B cell (primary cell): ENCODE measurements at regions of chr2 and their contacts with region 1.

Region 1: DNA sequence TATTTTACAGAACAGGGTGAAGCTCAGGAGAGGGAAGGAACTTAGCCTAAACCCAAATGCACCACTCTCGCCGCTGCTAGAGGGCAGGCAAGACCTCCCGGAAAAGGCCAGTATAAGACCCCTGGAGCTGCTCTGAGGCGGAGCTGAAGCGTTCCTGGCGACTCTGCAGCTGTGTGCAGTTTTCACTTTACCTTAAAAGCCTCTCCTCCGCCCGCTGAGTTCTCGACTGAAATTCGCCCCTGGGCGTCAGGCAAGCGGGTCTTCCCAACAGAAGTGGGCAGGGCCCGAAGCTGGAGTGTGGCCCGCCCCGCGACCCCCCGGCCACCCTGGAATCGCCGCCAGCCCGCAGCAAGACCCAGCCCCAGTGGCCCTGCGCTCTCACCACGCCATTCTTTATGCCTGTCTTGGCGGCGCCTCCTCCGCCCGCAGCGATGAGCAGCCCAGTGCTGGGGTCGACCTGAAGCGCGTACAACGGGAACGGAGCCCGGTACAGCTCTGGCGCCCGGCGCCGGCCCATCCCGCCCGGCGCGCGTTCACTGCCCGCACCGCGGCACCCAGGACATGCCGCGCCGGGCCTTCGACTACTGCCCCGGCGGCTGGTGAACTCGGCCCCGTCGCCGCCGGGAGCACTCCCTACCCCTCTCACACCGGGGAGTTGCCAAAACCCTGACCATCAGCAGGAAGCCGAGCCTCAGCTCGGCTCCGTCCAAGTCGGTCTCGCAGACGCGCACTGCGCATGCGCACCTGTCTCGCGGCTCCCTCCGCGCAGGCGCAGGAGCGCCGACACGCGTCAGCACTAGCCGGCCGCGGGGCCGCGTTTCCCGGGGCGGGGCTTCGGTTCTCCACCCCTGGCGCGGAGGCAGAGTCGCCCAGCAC is at the start of gene PREB:
- DNase-seq: peak; percentile 97
- ATAC-seq: peak; percentile 99
- H3K4me3 ChIP-seq: peak within 1 kb of the TSS; percentile 62 to 89 (median 78)
- H3K4me3 Mint-ChIP-seq: peak within 1 kb of the TSS; percentile 96
- H3K27ac ChIP-seq: peak within 1 kb of the TSS in 1 of 2 donors; percentile 86
- H3K27ac Mint-ChIP-seq: peak within 1 kb of the TSS; percentile 97
- H3K4me1 ChIP-seq: peaks cover 17 to 25% of the 10 kb centered on the region in 2 donors
- H3K4me1 Mint-ChIP-seq: peaks cover 24% of the 10 kb centered on the region
- H3K27me3 ChIP-seq: no peaks in the 10 kb centered on the region
- H3K27me3 Mint-ChIP-seq: no peaks in the 10 kb centered on the region
- CTCF ChIP-seq: no peak
- total RNA-seq, gene PREB: 44.6 and 46.0 TPM in 2 replicates

Region 2: DNA sequence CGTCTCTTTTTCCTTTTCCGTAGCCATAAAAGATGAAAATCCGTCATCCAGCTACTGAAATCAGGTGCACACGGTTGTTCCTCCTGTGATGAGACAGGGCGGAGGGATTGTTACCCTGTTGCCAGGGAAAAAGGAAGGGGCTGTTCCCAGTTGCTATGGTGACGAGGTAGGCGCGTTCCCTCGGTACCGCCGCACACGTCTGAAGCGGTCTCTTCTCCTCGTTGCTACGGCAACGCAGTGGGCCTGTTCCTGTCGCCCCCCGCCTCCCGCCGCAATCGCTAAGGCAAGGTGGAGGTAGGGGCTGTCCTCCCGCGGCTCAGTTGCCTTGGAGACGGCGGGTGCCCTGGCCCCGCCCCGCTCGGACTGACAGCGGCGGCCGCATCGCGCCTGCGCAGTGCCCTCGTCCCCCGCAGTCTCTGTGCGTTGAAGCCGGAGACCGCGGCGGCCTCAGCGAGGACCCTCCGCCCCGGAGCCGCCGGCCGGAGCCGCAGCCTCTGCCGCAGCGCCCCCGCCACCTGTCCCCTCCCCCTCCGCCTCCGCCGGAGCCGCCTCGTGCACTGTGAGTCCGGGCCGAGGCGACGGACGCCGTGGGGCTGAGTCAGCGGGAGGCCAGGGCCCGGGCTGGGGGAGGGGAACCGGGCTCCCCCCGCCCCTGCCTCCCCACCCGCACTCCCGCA is 163.8 kb before region 1 on chr2 and contains the start of gene MAPRE3:
- CTCF ChIA-PET with region 1: no interaction called
- POLR2A ChIA-PET with region 1: no interaction called
- intact Hi-C with region 1: loop called (anchors 1 kb)
- DNase-seq: peak; percentile 92
- ATAC-seq: peak; percentile 94
- H3K4me3 ChIP-seq: peak within 1 kb of the TSS; percentile 59 to 70 (median 62)
- H3K4me3 Mint-ChIP-seq: peak within 1 kb of the TSS; percentile 91
- H3K27ac ChIP-seq: peak within 1 kb of the TSS in 1 of 2 donors; percentile 47
- H3K27ac Mint-ChIP-seq: peak within 1 kb of the TSS; percentile 59
- H3K4me1 ChIP-seq: peaks cover 11 to 12% of the 10 kb centered on the region in 2 donors
- H3K4me1 Mint-ChIP-seq: peaks cover 19% of the 10 kb centered on the region
- H3K27me3 ChIP-seq: peaks cover 2 to 11% (median 5%) of the 10 kb centered on the region in 4 experiments
- H3K27me3 Mint-ChIP-seq: peaks cover 26% of the 10 kb centered on the region
- CTCF ChIP-seq: no peak
- total RNA-seq, gene MAPRE3: 5.4 and 7.1 TPM in 2 replicates

Region 3: DNA sequence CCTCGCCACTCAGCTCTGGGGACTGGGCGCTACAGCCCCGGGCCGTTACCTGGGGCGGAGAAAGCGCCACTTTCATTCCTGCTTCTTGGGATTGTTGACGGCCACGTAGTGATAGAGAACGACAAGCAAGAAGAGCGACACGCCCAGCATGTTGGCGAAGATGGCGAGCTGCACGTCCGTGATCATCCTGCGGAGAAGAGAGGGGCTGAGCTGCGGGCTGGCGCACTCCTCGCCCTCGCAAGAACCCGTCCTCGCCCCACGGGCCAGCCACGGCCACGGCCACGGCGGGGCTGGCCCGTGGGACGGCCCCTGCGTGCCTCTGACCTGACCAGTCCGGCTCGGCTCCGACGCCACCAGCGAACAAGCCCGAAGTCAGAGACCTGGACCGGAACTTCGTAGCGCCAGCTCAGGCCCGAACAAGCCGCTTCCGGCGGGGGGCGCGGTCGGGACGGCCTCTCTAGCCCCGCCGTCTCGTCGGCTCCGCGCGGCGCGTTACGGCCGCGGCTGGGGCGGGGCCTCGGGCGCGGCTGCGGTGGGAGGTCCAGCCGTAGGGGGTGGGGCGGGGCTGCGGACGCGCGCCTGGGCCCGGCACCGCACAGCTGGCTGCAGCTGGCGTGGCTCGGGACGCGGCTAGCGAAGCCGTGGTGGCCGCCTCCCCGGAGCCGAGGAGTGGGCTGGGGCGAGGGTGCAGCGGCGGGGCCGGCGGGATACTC is 62.7 kb before region 1 on chr2 and contains the start of gene OST4:
- CTCF ChIA-PET with region 1: no interaction called
- POLR2A ChIA-PET with region 1: interaction called, 3 read pairs
- intact Hi-C with region 1: loop called (anchors 1 kb)
- DNase-seq: peak; percentile 93
- ATAC-seq: peak; percentile 95
- H3K4me3 ChIP-seq: peak within 1 kb of the TSS; percentile 79 to 91 (median 88)
- H3K4me3 Mint-ChIP-seq: peak within 1 kb of the TSS; percentile 99
- H3K27ac ChIP-seq: peak within 1 kb of the TSS; percentile 64 to 87
- H3K27ac Mint-ChIP-seq: peak within 1 kb of the TSS; percentile 95
- H3K4me1 ChIP-seq: peaks cover 35 to 43% of the 10 kb centered on the region in 2 donors
- H3K4me1 Mint-ChIP-seq: peaks cover 62% of the 10 kb centered on the region
- H3K27me3 ChIP-seq: no peaks in the 10 kb centered on the region
- H3K27me3 Mint-ChIP-seq: no peaks in the 10 kb centered on the region
- CTCF ChIP-seq: no peak
- total RNA-seq, gene OST4: 195 and 199 TPM in 2 replicates

Region 4: GRCh38 chr2:27123302-27124231 is 10.6 kb before region 1 on chr2 and contains the start of gene ABHD1:
- CTCF ChIA-PET with region 1: interaction called, 19 read pairs
- POLR2A ChIA-PET with region 1: interaction called, 29 read pairs
- intact Hi-C with region 1: loop called (anchors 1 kb)
- DNase-seq: peak; percentile 71
- ATAC-seq: peak; percentile 87
- H3K4me3 ChIP-seq: peak within 1 kb of the TSS; percentile 58 to 74 (median 68)
- H3K4me3 Mint-ChIP-seq: peak within 1 kb of the TSS; percentile 93
- H3K27ac ChIP-seq: no peak within 1 kb of the TSS
- H3K27ac Mint-ChIP-seq: peak within 1 kb of the TSS; percentile 87
- H3K4me1 ChIP-seq: peaks cover 17% of the 10 kb centered on the region in 2 donors
- H3K4me1 Mint-ChIP-seq: peaks cover 18% of the 10 kb centered on the region
- H3K27me3 ChIP-seq: peaks cover 0 to 16% (median 6%) of the 10 kb centered on the region in 4 experiments
- H3K27me3 Mint-ChIP-seq: peaks cover 32% of the 10 kb centered on the region
- CTCF ChIP-seq: no peak
- total RNA-seq, gene ABHD1: 0.73 and 1.5 TPM in 2 replicates

Region 5: GRCh38 chr2:27211829-27212627 is 77.9 kb after region 1 on chr2 and contains the starts of genes ATRAID and SLC5A6:
- CTCF ChIA-PET with region 1: no interaction called
- POLR2A ChIA-PET with region 1: interaction called, 7 read pairs
- intact Hi-C with region 1: loop called (anchors 1 kb)
- DNase-seq: peak; percentile 95
- ATAC-seq: peak; percentile 90
- H3K4me3 ChIP-seq: peak within 1 kb of the TSS; percentile 72 to 100 (median 90)
- H3K4me3 Mint-ChIP-seq: peak within 1 kb of the TSS; percentile 86
- H3K27ac ChIP-seq: peak within 1 kb of the TSS; percentile 100
- H3K27ac Mint-ChIP-seq: peak within 1 kb of the TSS; percentile 92
- H3K4me1 ChIP-seq: peaks cover 18 to 19% of the 10 kb centered on the region in 2 donors
- H3K4me1 Mint-ChIP-seq: peaks cover 33% of the 10 kb centered on the region
- H3K27me3 ChIP-seq: no peaks in the 10 kb centered on the region
- H3K27me3 Mint-ChIP-seq: no peaks in the 10 kb centered on the region
- CTCF ChIP-seq: no peak
- total RNA-seq, gene ATRAID: 88.8 and 89.9 TPM in 2 replicates
- total RNA-seq, gene SLC5A6: 46.1 and 50.8 TPM in 2 replicates

Region 6: GRCh38 chr2:27356382-27357181 is 222.4 kb after region 1 on chr2 and contains the start of gene GTF3C2:
- CTCF ChIA-PET with region 1: no interaction called
- POLR2A ChIA-PET with region 1: no interaction called
- intact Hi-C with region 1: loop called (anchors 1 kb)
- DNase-seq: peak; percentile 98
- ATAC-seq: peak; percentile 82
- H3K4me3 ChIP-seq: peak within 1 kb of the TSS; percentile 64 to 90 (median 82)
- H3K4me3 Mint-ChIP-seq: peak within 1 kb of the TSS; percentile 97
- H3K27ac ChIP-seq: peak within 1 kb of the TSS; percentile 86 to 88
- H3K27ac Mint-ChIP-seq: peak within 1 kb of the TSS; percentile 99
- H3K4me1 ChIP-seq: peaks cover 18 to 25% of the 10 kb centered on the region in 2 donors
- H3K4me1 Mint-ChIP-seq: peaks cover 48% of the 10 kb centered on the region
- H3K27me3 ChIP-seq: no peaks in the 10 kb centered on the region
- H3K27me3 Mint-ChIP-seq: no peaks in the 10 kb centered on the region
- CTCF ChIP-seq: no peak
- total RNA-seq, gene GTF3C2: 114 and 121 TPM in 2 replicates

Region 7: DNA sequence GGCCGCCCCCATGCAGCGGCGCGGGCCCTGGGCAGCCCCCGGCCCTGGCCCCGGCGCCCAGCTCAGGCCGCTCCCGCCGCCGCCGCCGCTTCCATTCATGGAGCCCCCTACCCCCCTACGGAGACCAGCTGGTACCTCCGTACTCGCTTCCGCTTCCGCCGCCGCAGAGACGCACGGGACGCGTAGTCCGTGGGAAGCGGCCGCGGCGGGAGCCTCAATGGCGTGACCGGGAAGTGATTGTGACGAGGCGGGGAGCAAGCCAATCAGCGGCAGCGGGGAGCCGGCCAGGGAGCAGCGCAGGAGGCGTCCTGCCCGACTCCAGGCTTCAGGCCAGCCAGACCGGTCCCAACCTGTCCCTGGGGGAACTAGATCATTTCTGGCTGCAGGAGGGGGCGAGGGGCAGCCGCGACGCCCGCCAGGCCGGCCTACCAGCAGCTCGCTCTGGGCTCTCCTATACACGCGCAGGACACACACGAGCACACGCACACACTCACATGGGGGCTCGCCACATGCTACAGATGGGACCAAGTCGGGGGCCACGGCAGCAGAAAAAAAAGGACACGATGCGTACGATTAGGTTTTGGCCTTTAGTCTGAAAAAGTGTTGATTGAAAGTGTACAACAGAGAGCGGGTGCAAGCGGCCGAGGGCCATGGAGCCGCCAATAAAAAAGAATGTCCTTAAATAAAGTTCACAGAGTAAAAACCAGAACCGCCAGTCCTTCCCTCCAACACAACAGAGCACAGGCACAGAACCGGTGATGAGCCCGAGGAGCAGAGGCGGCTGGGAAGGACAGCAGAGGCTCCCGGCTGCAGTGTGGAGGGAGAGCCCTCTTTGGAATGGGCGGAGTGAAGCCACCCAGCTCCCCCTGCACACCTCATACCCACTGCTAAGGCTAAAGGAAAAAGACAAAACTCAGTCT is 246.7 kb after region 1 on chr2 and contains the start of gene ZNF513:
- CTCF ChIA-PET with region 1: no interaction called
- POLR2A ChIA-PET with region 1: no interaction called
- intact Hi-C with region 1: no loop called
- DNase-seq: peak; percentile 92
- ATAC-seq: peak; percentile 94
- H3K4me3 ChIP-seq: peak within 1 kb of the TSS; percentile 40 to 66 (median 63)
- H3K4me3 Mint-ChIP-seq: peak within 1 kb of the TSS; percentile 94
- H3K27ac ChIP-seq: peak within 1 kb of the TSS; percentile 56 to 94
- H3K27ac Mint-ChIP-seq: peak within 1 kb of the TSS; percentile 96
- H3K4me1 ChIP-seq: peaks cover 16 to 20% of the 10 kb centered on the region in 2 donors
- H3K4me1 Mint-ChIP-seq: peaks cover 30% of the 10 kb centered on the region
- H3K27me3 ChIP-seq: no peaks in the 10 kb centered on the region
- H3K27me3 Mint-ChIP-seq: no peaks in the 10 kb centered on the region
- CTCF ChIP-seq: no peak
- total RNA-seq, gene ZNF513: 29.0 and 31.7 TPM in 2 replicates